ENCODE measurements at regions of chr3 and their contacts with region 1.

Region 1: DNA sequence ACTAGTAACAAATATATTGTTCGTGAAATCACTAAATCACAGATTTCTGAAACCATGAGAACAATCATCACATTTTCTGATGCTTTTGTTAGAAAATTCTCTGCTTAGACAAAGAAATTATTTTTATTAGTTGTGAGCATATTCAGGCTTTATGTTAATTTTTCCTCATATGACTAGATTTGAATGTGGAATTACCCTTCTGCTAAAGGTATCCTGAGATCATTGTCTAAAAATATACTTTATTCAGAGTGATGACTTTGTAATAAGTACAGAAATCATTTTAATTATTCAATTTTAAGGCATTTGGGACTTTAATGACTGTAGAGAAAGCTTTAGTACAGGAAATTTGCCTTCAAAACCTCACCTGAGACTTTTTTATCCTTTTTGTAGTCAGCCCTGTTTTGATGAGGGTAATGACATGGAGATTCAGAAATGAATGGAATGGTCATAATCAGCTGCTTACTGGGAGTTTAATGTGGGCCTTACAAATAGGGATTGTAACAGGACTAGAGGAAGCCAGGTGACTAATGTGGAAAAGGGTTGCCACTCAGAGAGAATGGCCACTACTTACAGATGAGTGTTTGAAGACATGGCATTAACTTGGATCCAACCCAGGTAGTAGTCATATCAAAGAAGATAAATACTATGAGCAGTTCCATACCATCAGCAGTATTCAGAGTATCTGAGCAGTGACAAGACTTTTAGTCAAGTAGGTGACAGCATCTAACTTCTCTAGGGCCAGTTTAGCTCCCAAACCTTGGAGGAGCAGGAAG is 148.3 kb downstream of the MBNL1 start:
- DNase-seq: no peak
- ATAC-seq: no peak
- H3K4me3 ChIP-seq: no peak overlapping the region
- H3K4me3 Mint-ChIP-seq: no peak overlapping the region
- H3K27ac ChIP-seq: no peak overlapping the region
- H3K27ac Mint-ChIP-seq: peak overlapping the region; percentile 57 to 74
- H3K4me1 ChIP-seq: peaks cover 0 to 18% of the 10 kb centered on the region in 2 experiments
- H3K4me1 Mint-ChIP-seq: peaks cover 59 to 79% (median 74%) of the 10 kb centered on the region in 3 donors
- H3K27me3 ChIP-seq: no peaks in the 10 kb centered on the region
- H3K27me3 Mint-ChIP-seq: no peaks in the 10 kb centered on the region

Region 2: GRCh38 chr3:152430223-152431002 is 13.4 kb after region 1 on chr3:
- CTCF ChIA-PET with region 1: no interaction called
- POLR2A ChIA-PET with region 1: interaction called, 4 to 12 read pairs
- DNase-seq: no peak
- ATAC-seq: no peak
- H3K4me3 ChIP-seq: no peak overlapping the region
- H3K4me3 Mint-ChIP-seq: no peak overlapping the region
- H3K27ac ChIP-seq: peak overlapping the region; percentile 34
- H3K27ac Mint-ChIP-seq: peak overlapping the region; percentile 66 to 85
- H3K4me1 ChIP-seq: peaks cover 0 to 5% of the 10 kb centered on the region in 2 experiments
- H3K4me1 Mint-ChIP-seq: peaks cover 50 to 59% (median 57%) of the 10 kb centered on the region in 3 donors
- H3K27me3 ChIP-seq: no peaks in the 10 kb centered on the region
- H3K27me3 Mint-ChIP-seq: no peaks in the 10 kb centered on the region

Region 3: GRCh38 chr3:152471814-152472671 is 55.0 kb after region 1 on chr3:
- CTCF ChIA-PET with region 1: no interaction called
- POLR2A ChIA-PET with region 1: interaction called in 1 of 2 experiments, 11 read pairs
- DNase-seq: peak; percentile 46 to 85 (median 66)
- ATAC-seq: peak; percentile 81 to 89 (median 84)
- H3K4me3 ChIP-seq: peak overlapping the region; percentile 25 to 39
- H3K4me3 Mint-ChIP-seq: peak overlapping the region; percentile 62 to 72 (median 66)
- H3K27ac ChIP-seq: peak overlapping the region; percentile 52
- H3K27ac Mint-ChIP-seq: peak overlapping the region; percentile 72 to 80
- H3K4me1 ChIP-seq: peaks cover 0 to 9% of the 10 kb centered on the region in 2 experiments
- H3K4me1 Mint-ChIP-seq: peaks cover 15 to 20% (median 16%) of the 10 kb centered on the region in 3 donors
- H3K27me3 ChIP-seq: no peaks in the 10 kb centered on the region
- H3K27me3 Mint-ChIP-seq: no peaks in the 10 kb centered on the region

Region 4: DNA sequence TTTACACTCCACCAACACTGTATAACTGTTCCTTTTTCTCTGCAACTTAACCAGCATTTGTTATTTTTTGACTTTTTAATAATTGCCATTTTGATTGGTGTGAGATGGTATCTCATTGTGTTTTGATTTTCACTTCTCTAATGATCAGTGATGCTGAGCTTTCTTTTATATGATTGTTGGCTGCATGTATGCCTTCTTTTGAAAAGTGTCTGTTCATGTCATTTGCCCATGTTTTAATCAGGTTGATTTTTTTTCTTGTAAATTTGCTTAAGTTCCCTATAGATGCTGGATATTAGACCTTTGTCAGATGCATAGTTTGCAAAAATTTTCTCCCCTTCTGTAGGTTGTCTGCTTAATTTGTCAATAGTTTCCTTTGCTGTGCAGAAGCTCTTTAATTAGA is 114.7 kb after region 1 on chr3:
- CTCF ChIA-PET with region 1: no interaction called
- POLR2A ChIA-PET with region 1: no interaction called
- DNase-seq: no peak
- ATAC-seq: no peak
- H3K4me3 ChIP-seq: no peak overlapping the region
- H3K4me3 Mint-ChIP-seq: no peak overlapping the region
- H3K27ac ChIP-seq: no peak overlapping the region
- H3K27ac Mint-ChIP-seq: no peak overlapping the region
- H3K4me1 ChIP-seq: no peaks in the 10 kb centered on the region
- H3K4me1 Mint-ChIP-seq: no peaks in the 10 kb centered on the region
- H3K27me3 ChIP-seq: no peaks in the 10 kb centered on the region
- H3K27me3 Mint-ChIP-seq: peaks cover 0 to 6% of the 10 kb centered on the region in 2 donors